HEK293 (cell line): ENCODE measurements at regions of chr18 and their contacts with region 1.

Region 1: DNA sequence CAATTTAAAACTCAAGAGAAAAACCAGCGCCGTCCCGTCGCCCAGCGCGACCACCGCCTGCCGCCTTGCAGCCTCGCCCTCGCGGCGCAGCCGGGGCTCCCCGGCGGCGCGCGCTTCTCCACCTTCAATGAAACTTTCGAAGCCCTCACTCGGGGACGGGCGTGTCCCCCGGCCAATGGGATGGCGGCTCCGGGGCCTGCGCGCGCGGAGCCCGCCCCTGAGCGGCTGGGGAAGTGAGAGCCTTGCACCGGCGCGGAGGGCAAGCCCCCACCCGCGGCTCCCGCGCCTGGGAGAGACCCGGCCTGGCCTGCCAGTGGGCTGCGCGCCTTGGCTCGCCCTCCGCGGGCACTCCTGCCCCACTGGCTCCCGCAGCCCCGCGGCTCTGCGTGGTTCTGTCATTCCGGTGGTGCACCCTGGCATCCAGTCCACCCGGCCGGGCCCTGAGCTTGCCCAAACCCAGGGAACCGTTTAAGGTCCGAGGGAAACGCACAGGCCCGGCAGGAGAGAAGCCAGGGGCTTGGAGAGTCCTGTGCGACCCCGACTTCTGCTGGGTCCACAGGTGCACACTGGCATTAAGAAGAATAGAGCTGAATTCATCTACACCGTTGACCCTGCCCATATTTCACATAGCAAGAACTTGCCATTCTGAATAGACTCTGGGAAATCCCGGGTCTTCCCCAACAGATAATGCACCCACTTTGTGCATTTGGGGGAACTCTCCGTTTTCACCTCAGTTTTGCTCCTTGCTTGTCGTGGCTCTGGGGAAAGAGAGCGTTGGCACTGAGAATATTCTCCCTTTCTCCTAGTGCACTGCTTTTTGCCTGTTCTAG is at the start of gene PIEZO2:
- H3K4me3 ChIP-seq: peak within 1 kb of the TSS; percentile 45
- H3K27ac ChIP-seq: peak within 1 kb of the TSS; percentile 68; the same call in 1 of the 2 replicates
- H3K4me1 ChIP-seq: peaks cover 6% of the 10 kb centered on the region
- CTCF ChIP-seq: no peak

Region 2: DNA sequence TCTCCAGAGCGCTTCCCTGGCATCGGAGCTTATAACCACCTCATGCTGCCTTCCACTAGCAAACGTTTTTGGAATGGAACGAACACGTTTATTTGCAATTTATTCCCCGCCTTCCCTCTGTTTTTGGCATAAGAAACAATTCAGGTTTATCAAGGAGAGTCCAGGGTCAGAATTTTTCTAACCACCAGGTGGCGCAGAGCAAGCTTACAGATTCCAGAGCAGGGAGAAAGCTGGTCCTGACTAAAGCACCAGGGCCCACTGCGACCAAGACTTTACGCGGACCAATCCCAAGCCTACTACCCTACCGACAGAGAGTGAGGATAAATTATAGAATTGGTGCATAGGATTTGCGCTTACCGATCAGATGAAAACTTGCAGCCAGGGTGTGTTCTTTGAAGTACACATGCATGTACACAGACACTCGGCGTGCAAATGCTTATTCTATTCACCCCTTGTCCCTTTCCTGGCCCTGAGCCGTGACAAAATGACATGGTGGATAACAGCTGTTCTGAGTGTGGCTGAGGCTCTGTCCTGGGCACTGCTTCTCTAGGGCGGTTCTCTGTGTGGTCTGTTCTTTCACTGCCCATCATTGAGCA is 589.1 kb before region 1 on chr18:
- CTCF ChIA-PET with region 1: interaction called, 27 read pairs
- POLR2A ChIA-PET with region 1: no interaction called
- H3K4me3 ChIP-seq: no peak overlapping the region
- H3K27ac ChIP-seq: no peak overlapping the region
- H3K4me1 ChIP-seq: no peaks in the 10 kb centered on the region
- CTCF ChIP-seq: peak; percentile 56

Region 3: DNA sequence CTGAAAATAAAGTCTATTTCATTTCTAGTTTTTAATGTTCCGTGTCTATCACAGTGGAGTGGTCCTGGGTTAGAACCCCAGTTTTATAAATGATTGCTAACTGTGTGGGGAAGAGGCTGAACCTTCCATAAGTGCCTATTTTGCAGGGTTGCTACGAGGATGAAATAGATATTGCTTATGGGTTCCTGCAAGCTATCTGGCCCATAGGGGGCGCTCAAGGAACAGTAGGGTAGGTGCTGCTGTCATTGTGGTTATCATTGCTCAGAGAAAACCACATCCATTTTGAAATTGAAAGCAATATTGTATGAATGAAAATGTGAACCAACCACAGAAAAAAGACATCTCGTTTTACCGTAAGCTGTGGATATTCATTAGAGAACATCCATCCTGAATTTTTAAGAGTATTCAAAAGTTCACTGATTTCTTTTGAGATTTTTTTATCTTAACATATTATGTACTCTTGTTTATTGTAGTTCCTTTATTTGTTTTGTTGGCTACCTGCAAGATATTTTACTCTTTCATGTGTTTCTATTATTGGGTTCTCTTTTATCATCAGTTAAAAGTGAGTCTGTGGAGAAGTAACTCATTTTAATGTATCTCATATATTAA is 362.3 kb before region 1 on chr18:
- CTCF ChIA-PET with region 1: interaction called, 16 read pairs
- POLR2A ChIA-PET with region 1: no interaction called
- H3K4me3 ChIP-seq: no peak overlapping the region
- H3K27ac ChIP-seq: no peak overlapping the region
- H3K4me1 ChIP-seq: no peaks in the 10 kb centered on the region
- CTCF ChIP-seq: 0 out of 2 replicates have a peak, but pooled peaks have one; percentile 33

Region 4: GRCh38 chr18:11136241-11136640 is 13.4 kb before region 1 on chr18:
- CTCF ChIA-PET with region 1: interaction called, 10 read pairs
- POLR2A ChIA-PET with region 1: no interaction called
- H3K4me3 ChIP-seq: no peak overlapping the region
- H3K27ac ChIP-seq: no peak overlapping the region
- H3K4me1 ChIP-seq: no peaks in the 10 kb centered on the region
- CTCF ChIP-seq: no peak